Sigmoid colon (tissue), 7 donors: ENCODE measurements at regions of chr7 and their contacts with region 1.

Region 1: DNA sequence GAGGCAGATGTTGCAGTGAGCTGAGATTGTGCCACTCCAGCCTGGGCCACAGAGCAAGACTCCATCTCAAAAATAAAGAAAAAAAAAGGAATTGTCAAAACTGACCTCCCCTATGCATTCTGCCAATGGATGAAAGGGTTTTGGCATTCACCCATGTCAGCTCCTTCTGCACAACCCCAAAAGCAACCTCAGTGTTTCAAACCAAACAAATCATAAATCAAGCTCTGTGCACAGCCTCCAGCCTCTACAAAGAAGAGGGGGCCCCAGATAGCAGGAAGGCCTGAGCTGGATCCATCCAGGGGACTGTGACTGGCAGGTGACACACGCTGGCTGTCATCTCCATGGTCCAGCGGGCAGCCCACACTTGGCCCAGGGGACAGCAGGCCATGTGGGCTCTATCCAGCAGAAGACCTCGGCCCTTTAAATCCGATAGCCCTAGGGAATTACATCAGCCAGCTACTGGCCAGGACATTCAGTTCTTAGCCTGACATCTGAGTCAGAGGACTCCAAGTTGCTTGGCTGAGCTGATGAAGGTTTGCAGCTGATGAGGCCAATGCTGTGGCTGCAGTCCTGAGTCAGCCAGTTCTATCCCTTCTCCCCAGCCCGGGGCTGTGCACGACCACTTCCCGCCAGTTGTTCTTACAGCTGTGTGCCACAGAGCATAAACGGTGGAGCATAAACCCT is 52.0 kb upstream of the FIGNL1 start:
- DNase-seq: peak; percentile 95
- H3K4me3 ChIP-seq: peak overlapping the region in 1 of 4 donors; percentile 2
- H3K27ac ChIP-seq: peak overlapping the region; percentile 61 to 88 (median 79)
- H3K4me1 ChIP-seq: peaks cover 0 to 33% (median 27%) of the 10 kb centered on the region in 4 donors
- H3K27me3 ChIP-seq: no peaks in the 10 kb centered on the region
- CTCF ChIP-seq: no peak
- EP300 ChIP-seq: peak; percentile 96 to 100 (median 99)
- POLR2A ChIP-seq: no peak

Region 2: GRCh38 chr7:50657341-50657873 is 155.3 kb after region 1 on chr7:
- intact Hi-C with region 1: loop called (anchors 1 kb)
- DNase-seq: peak; percentile 95
- H3K4me3 ChIP-seq: no peak overlapping the region
- H3K27ac ChIP-seq: peak overlapping the region; percentile 72 to 88 (median 84)
- H3K4me1 ChIP-seq: peaks cover 0 to 73% (median 65%) of the 10 kb centered on the region in 4 donors
- H3K27me3 ChIP-seq: no peaks in the 10 kb centered on the region
- CTCF ChIP-seq: peak in 1 of 4 experiments; percentile 29
- EP300 ChIP-seq: peak; percentile 87 to 99 (median 97)
- POLR2A ChIP-seq: no peak